HepG2 (cell line): ENCODE measurements at regions of chr20 and their contacts with region 1.

Region 1: DNA sequence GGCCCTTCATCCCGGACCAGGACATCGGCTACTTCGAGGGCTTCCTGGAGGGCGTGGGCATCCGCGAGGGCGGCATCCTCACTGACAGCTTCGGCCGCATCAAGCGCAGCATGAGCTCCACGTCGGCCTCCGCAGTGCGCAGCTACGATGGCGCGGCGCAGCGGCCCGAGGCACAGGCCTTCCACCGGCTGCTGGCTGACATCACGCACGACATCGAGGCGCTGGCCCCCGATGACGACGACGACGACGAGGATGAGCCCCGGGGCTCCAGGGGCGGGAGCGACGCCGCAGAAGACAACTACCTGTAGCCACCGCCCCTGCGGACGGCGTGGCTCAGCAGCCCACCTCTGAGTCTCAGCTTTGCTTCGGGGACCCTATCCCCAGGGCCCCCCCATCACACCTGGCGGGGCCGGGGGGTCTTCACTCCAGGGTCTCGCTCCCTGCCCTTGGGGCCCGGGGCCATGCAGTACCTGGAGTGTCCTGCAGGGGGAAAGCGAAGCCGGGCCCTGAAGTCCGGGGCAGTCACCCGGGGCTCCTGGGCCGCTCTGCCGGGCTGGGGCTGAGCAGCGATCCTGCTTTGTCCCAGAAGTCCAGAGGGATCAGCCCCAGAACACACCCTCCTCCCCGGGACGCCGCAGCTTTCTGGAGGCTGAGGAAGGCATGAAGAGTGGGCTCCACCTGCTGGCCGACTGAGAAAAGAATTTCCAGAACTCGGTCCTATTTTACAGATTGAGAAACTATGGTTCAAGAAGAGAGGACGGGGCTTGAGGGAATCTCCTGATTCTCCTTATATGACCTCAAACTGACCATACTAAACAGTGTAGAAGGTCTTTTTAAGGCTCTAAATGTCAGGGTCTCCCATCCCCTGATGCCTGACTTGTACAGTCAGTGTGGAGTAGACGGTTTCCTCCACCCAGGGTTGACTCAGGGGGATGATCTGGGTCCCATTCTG is 20.8 kb upstream of the HCK start:
- DNase-seq: peak; percentile 94
- ATAC-seq: peak; percentile 97
- H3K4me3 ChIP-seq: peak overlapping the region in 1 of 3 experiments; percentile 24; a peak in 1 of 6 replicates
- H3K27ac ChIP-seq: no peak overlapping the region
- H3K4me1 ChIP-seq: peaks cover 23% of the 10 kb centered on the region
- H3K27me3 ChIP-seq: peaks cover 0 to 36% of the 10 kb centered on the region in 2 experiments; a peak in 3 of 5 replicates
- CTCF ChIP-seq: peak; percentile 93
- EP300 ChIP-seq: no peak
- POLR2A ChIP-seq: no peak
- RAD21 ChIP-seq: peak; percentile 97

Region 2: DNA sequence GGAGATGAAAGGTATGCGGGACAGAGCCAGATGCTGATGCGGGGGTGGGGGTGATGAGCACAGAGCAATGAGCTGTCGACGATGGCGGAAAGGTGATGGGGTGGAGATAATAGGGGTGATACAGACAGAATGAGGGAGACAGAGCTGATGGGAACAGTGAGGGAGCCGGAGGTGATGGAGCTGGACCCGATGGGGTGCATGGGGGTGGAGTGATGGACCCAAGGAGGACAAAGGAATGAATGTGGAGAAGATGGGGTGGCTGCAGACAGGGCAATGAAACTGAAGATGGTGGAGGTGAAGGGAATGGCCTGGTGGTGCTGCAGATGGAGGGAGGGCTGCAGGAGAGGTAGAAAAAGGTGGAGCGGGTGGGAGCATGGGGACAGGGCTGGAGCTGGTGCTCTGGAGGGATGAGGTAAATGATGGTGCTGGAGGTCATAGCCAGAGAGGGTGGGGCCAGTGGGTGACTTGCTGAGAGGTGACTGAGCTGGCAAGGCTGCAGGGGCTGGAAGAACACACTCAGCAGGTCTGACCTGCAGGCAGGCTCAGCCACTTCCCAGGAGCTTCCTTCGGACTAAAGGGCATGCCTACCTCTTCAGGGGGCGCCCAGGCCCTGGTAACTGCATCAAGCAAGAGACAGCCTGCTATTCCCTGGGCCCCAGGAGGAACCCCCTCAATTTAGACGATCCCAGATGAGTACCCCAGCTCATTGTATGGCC is 179.9 kb before region 1 on chr20:
- CTCF ChIA-PET with region 1: interaction called, 64 read pairs
- POLR2A ChIA-PET with region 1: no interaction called
- in situ Hi-C with region 1: no loop called
- intact Hi-C with region 1: loop called (anchors 1 kb)
- DNase-seq: no peak
- ATAC-seq: no peak
- H3K4me3 ChIP-seq: no peak overlapping the region
- H3K27ac ChIP-seq: no peak overlapping the region
- H3K4me1 ChIP-seq: no peaks in the 10 kb centered on the region
- H3K27me3 ChIP-seq: peaks cover 22 to 51% of the 10 kb centered on the region in 2 experiments
- CTCF ChIP-seq: no peak
- EP300 ChIP-seq: no peak
- POLR2A ChIP-seq: no peak
- RAD21 ChIP-seq: no peak

Region 3: DNA sequence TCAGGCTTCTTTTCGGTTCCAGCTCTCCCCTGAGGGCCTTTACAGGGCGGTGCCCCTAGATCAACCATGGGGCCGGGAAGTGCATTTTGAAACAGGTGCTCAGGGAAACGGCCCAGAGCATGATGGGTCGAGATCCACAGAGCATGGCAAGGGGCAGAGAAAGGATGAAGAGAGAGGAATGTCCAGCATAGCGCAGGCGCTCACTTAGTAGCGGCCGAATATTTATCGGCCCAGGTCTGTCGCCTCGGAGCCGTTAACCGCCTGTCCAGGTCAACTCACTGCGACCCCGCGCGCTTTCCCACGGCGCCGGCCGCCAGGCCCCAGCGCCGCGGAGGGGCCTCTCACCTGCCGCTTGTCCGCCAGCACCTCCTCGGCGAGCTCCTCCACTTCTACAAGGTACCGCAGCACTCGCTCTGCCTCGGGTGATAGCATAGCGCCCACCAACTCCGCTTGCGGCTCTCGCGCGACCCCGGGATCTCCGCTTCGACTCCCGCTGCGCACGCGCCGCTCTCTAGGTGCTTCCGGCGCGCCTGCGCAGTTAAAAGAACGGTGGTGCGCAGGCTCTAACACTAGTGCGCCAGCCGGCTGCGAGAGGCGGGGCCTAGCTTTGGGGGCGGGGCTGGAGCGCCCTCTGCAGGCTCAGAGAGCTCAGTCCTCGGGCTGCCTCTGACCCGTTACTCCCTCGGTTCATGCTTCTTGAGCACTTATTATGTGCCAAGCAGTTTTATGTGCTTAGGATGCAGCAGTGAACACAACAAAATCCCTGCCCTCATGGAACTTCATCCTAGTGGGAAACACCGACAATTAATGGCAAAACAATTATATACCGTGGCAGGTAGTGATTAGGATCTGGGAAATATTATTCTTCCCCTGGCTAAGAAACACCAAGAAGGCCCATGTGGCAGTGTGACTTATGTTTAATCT is 79.5 kb before region 1 on chr20 and contains the start of gene PDRG1:
- CTCF ChIA-PET with region 1: interaction called, 8 read pairs
- POLR2A ChIA-PET with region 1: no interaction called
- in situ Hi-C with region 1: no loop called
- intact Hi-C with region 1: loop called (anchors 5 kb)
- DNase-seq: peak; percentile 98
- ATAC-seq: peak; percentile 96
- H3K4me3 ChIP-seq: peak within 1 kb of the TSS; percentile 96 to 98 (median 98)
- H3K27ac ChIP-seq: peak within 1 kb of the TSS; percentile 73
- H3K4me1 ChIP-seq: peaks cover 15% of the 10 kb centered on the region
- H3K27me3 ChIP-seq: no peaks in the 10 kb centered on the region; a peak in 1 of 5 replicates
- CTCF ChIP-seq: peak; percentile 100
- EP300 ChIP-seq: 0 out of 4 replicates have a peak, but pooled peaks have one; percentile 3 to 4
- POLR2A ChIP-seq: peak; percentile 96 to 97
- RAD21 ChIP-seq: peak; percentile 97
- total RNA-seq, gene PDRG1: 16.6 and 22.1 TPM in 2 replicates

Region 4: DNA sequence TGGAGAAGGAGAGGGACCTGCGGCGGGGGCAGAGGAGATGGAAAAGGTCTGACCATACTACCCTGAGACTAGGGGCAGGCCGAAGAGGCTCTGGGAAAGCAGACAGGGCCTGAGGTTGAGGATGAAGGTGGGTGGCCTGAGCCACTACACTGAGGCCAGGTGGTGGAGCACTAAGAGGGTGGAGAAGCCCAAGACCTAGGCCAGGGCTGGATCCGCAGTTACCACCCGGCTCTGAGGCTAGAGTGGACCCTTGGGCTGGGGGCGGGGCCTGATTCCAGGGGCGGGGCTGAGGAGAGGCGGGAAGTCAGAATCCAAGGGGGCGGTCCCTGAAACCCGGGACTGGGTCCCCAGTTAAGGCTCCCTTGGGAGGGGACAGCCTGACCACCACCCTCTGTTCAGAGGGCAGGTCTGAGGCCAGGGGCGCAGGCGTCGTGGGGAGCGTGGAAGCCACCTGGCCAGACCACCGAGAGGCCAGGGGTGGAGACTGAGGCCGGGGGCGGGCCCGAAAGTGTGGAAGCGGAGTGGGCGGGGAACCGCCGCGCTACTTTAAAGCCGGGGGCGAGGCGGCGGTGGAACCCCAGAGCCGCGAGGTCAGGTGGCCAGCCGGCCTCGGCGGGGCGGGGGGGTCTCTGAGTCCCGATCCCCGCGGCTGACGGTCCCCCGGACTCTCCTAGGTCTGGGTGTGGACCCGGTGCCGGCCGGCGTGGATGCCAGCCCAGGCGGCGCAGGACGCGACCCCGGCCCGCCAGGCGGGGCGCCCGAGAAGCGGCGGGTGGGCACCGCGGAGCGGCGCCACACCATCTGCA is 12.8 kb before region 1 on chr20:
- CTCF ChIA-PET with region 1: interaction called, 4 read pairs
- POLR2A ChIA-PET with region 1: no interaction called
- in situ Hi-C with region 1: no loop called
- intact Hi-C with region 1: loop called (anchors 1 kb)
- DNase-seq: peak; percentile 76
- ATAC-seq: peak; percentile 92
- H3K4me3 ChIP-seq: peak overlapping the region; percentile 58 to 81 (median 65); a peak in 5 of 6 replicates
- H3K27ac ChIP-seq: no peak overlapping the region
- H3K4me1 ChIP-seq: peaks cover 13% of the 10 kb centered on the region
- H3K27me3 ChIP-seq: peaks cover 15 to 70% of the 10 kb centered on the region in 2 experiments; a peak in 4 of 5 replicates
- CTCF ChIP-seq: peak; percentile 24; the same call in 1 of the 2 replicates
- EP300 ChIP-seq: no peak
- POLR2A ChIP-seq: no peak
- RAD21 ChIP-seq: no peak

Region 5: GRCh38 chr20:32091888-32092346 is 60.6 kb after region 1 on chr20:
- CTCF ChIA-PET with region 1: interaction called, 9 read pairs
- POLR2A ChIA-PET with region 1: no interaction called
- in situ Hi-C with region 1: no loop called
- intact Hi-C with region 1: loop called (anchors 5 kb)
- DNase-seq: peak; percentile 82
- ATAC-seq: peak; percentile 88
- H3K4me3 ChIP-seq: no peak overlapping the region
- H3K27ac ChIP-seq: no peak overlapping the region
- H3K4me1 ChIP-seq: 0 out of 2 replicates have a peak, but pooled peaks cover 4% of the 10 kb centered on the region
- H3K27me3 ChIP-seq: peaks cover 7 to 32% of the 10 kb centered on the region in 2 experiments; a peak in 4 of 5 replicates
- CTCF ChIP-seq: peak; percentile 92
- EP300 ChIP-seq: no peak
- POLR2A ChIP-seq: no peak
- RAD21 ChIP-seq: peak; percentile 57; the same call in 1 of the 2 replicates

Region 6: DNA sequence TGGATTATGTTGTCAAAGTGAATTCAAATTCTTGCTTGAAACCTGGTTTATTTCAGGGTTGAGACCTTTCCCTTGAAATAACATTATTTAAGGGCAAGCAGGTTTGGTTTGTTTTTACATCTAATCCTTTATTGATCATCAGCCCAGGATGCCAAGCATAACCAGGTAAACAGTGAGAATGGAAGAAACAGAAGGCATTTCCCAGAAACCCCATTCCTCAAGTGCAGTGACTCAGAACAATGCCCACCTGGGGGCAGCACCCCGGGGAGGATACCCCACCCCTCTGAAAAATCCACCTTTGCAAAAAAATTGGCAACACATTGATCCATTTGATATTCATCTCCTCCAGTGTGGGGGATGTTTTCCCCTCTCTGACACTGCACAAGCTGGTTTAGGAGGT is 208.9 kb after region 1 on chr20:
- CTCF ChIA-PET with region 1: no interaction called
- POLR2A ChIA-PET with region 1: no interaction called
- in situ Hi-C with region 1: no loop called
- intact Hi-C with region 1: no loop called
- DNase-seq: no peak
- ATAC-seq: no peak
- H3K4me3 ChIP-seq: no peak overlapping the region
- H3K27ac ChIP-seq: no peak overlapping the region
- H3K4me1 ChIP-seq: peaks cover 52% of the 10 kb centered on the region
- H3K27me3 ChIP-seq: no peaks in the 10 kb centered on the region
- CTCF ChIP-seq: peak; percentile 48
- EP300 ChIP-seq: no peak
- POLR2A ChIP-seq: no peak
- RAD21 ChIP-seq: peak; percentile 17; the same call in 1 of the 2 replicates